ENCODE measurements at regions of chr10 and their contacts with region 1.

Region 1: GRCh38 chr10:97334370-97335175 is at the start of gene FRAT2:
- DNase-seq: peak; percentile 80 to 95 (median 87)
- ATAC-seq: peak; percentile 89
- H3K4me3 ChIP-seq: peak within 1 kb of the TSS; percentile 61 to 92
- H3K4me3 Mint-ChIP-seq: peak within 1 kb of the TSS; percentile 97
- H3K27ac ChIP-seq: peak within 1 kb of the TSS; percentile 99
- H3K27ac Mint-ChIP-seq: peak within 1 kb of the TSS; percentile 96
- H3K4me1 ChIP-seq: peaks cover 34% of the 10 kb centered on the region
- H3K4me1 Mint-ChIP-seq: peaks cover 39% of the 10 kb centered on the region
- H3K27me3 ChIP-seq: no peaks in the 10 kb centered on the region
- H3K27me3 Mint-ChIP-seq: no peaks in the 10 kb centered on the region
- CTCF ChIP-seq: no peak
- total RNA-seq, gene FRAT2: 20.8 to 22.3 TPM

Region 2: DNA sequence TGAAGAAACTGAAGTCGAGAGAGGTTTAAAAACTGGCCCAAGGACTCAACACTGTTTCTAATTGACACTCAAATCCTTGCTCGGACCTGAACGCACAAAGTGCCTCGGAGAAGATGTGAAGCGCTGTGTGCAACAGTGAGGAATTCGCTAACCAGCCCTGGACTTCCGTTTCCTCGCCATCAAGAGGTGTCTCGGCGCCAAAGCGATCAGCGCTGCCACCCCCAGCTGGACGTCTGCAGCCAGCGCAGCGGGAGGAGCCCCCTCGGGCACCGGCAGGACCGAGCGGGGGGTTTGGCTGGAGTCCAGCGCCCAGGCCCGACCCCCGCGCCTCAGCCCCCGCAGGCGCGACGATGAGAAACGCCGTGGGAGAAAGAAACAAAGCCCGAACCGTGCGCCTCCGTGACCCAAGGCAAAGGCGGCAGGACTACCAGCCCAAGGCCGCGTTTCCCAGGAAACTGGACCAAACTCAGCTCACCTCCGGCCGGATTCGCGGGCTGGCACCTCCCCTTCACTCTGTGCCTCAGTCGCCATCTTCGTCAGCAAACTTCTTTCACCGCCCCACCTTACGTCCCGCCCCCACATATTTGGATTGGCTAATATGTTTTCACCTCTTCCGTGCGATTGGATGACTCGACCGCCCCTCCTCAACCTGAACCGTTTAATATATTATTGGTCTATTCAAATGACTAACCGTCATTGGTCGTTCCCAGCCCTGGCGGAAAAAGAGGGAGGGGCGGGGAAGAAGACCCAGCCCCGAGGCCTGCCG is 42.3 kb before region 1 on chr10 and contains the start of gene ARHGAP19:
- CTCF ChIA-PET with region 1: interaction called, 4 read pairs
- POLR2A ChIA-PET with region 1: interaction called, 3 read pairs
- intact Hi-C with region 1: loop called (anchors 1 kb)
- DNase-seq: peak; percentile 86 to 98 (median 91)
- ATAC-seq: peak; percentile 99
- H3K4me3 ChIP-seq: peak within 1 kb of the TSS; percentile 82 to 93
- H3K4me3 Mint-ChIP-seq: peak within 1 kb of the TSS; percentile 94
- H3K27ac ChIP-seq: peak within 1 kb of the TSS; percentile 73 to 75
- H3K27ac Mint-ChIP-seq: peak within 1 kb of the TSS; percentile 86
- H3K4me1 ChIP-seq: peaks cover 6% of the 10 kb centered on the region
- H3K4me1 Mint-ChIP-seq: peaks cover 20% of the 10 kb centered on the region
- H3K27me3 ChIP-seq: no peaks in the 10 kb centered on the region
- H3K27me3 Mint-ChIP-seq: no peaks in the 10 kb centered on the region
- CTCF ChIP-seq: no peak
- total RNA-seq, gene ARHGAP19: 5.7 to 6.4 TPM

Region 3: GRCh38 chr10:97318772-97319651 is 15.6 kb before region 1 on chr10 and contains the start of gene FRAT1:
- CTCF ChIA-PET with region 1: interaction called, 29 read pairs
- POLR2A ChIA-PET with region 1: interaction called, 130 read pairs
- intact Hi-C with region 1: loop called (anchors 1 kb)
- DNase-seq: peak; percentile 86 to 97 (median 92)
- ATAC-seq: peak; percentile 76
- H3K4me3 ChIP-seq: peak within 1 kb of the TSS; percentile 76 to 79
- H3K4me3 Mint-ChIP-seq: peak within 1 kb of the TSS; percentile 99
- H3K27ac ChIP-seq: peak within 1 kb of the TSS; percentile 100
- H3K27ac Mint-ChIP-seq: peak within 1 kb of the TSS; percentile 100
- H3K4me1 ChIP-seq: peaks cover 24% of the 10 kb centered on the region
- H3K4me1 Mint-ChIP-seq: peaks cover 29% of the 10 kb centered on the region
- H3K27me3 ChIP-seq: no peaks in the 10 kb centered on the region
- H3K27me3 Mint-ChIP-seq: no peaks in the 10 kb centered on the region
- CTCF ChIP-seq: no peak
- total RNA-seq, gene FRAT1: 39.6 to 40.2 TPM

Region 4: DNA sequence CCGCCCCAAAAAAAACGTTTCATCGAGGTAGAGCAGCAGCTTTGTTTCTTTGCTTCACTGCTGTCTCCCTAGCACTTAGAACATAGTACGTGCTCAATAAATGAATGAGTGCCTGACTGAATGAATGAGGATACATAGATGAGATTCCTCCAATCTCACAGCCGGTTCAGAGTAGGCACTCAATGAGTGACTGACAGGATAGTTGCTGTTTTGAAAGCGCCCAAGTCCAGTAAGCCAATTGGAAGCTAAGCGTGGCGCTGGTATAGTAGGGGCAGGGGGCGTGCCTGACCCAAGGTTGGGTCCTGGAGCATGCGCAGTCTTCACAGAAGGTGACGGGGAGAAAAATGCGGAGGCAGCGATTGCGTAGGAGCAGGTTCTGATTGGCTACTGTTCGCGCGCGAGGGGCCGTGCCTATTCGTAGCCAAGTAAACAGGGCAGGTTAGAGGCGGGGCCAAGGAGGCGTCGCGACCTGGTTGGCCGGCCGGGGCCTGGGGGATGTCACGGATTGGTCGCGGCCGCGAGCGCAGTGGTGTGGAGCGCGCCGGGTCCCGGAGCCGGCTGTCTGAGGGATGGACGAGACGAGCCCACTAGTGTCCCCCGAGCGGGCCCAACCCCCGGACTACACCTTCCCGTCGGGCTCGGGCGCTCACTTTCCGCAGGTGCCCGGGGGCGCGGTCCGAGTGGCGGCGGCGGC is 305.7 kb after region 1 on chr10 and contains the start of gene PI4K2A:
- CTCF ChIA-PET with region 1: no interaction called
- POLR2A ChIA-PET with region 1: no interaction called
- intact Hi-C with region 1: loop called (anchors 2 to 10 kb)
- DNase-seq: peak; percentile 97 to 100 (median 98)
- ATAC-seq: peak; percentile 97
- H3K4me3 ChIP-seq: peak within 1 kb of the TSS; percentile 58 to 84
- H3K4me3 Mint-ChIP-seq: peak within 1 kb of the TSS; percentile 95
- H3K27ac ChIP-seq: peak within 1 kb of the TSS; percentile 54 to 55
- H3K27ac Mint-ChIP-seq: peak within 1 kb of the TSS; percentile 90
- H3K4me1 ChIP-seq: peaks cover 10% of the 10 kb centered on the region
- H3K4me1 Mint-ChIP-seq: peaks cover 24% of the 10 kb centered on the region
- H3K27me3 ChIP-seq: no peaks in the 10 kb centered on the region
- H3K27me3 Mint-ChIP-seq: no peaks in the 10 kb centered on the region
- CTCF ChIP-seq: no peak
- total RNA-seq, gene PI4K2A: 37.6 to 37.7 TPM

Measured in CD8-positive, alpha-beta T cell (primary cell).